Sigmoid colon (tissue), 7 donors: ENCODE measurements at regions of chr12 and their contacts with region 1.

Region 1: DNA sequence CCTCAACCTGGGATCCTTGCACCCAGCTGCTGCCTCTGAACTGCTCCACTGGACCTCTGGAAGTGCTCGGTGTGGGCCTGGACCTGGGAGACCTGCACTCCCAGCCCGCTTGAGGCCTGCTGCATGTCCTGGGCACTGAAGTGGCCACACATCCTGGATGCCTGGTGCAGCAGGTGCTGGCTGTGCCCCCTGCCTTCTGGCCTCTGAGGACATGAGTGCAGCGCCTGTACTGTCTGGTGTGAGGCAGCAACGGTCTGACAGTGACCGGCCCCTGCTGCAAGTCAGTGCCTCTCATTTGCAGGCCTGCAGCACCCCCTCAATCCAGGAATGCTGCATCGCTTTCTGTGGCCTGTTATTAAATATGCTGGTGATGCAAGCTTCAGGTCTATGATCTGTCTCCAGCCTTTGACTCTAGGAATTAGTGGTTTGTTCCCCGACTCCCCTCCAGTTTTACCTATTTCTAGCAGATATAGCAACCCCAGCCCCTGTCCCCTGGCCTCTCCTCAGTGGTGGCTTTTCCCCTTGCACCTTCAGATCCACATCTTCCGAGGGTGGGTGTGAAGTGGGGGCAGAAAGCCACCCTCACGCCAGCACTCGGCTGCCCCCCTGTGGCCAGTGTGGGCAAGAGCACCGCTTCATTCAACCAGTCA is 3.6 kb downstream of the SMIM41 start:
- DNase-seq: peak; percentile 81
- H3K4me3 ChIP-seq: no peak overlapping the region
- H3K27ac ChIP-seq: peak overlapping the region; percentile 54 to 79 (median 62)
- H3K4me1 ChIP-seq: peaks cover 0 to 27% (median 7%) of the 10 kb centered on the region in 4 donors
- H3K27me3 ChIP-seq: peaks cover 0 to under 1% (median 0%) of the 10 kb centered on the region in 3 donors
- CTCF ChIP-seq: peak; percentile 91 to 98 (median 98)
- EP300 ChIP-seq: no peak
- POLR2A ChIP-seq: no peak

Region 2: DNA sequence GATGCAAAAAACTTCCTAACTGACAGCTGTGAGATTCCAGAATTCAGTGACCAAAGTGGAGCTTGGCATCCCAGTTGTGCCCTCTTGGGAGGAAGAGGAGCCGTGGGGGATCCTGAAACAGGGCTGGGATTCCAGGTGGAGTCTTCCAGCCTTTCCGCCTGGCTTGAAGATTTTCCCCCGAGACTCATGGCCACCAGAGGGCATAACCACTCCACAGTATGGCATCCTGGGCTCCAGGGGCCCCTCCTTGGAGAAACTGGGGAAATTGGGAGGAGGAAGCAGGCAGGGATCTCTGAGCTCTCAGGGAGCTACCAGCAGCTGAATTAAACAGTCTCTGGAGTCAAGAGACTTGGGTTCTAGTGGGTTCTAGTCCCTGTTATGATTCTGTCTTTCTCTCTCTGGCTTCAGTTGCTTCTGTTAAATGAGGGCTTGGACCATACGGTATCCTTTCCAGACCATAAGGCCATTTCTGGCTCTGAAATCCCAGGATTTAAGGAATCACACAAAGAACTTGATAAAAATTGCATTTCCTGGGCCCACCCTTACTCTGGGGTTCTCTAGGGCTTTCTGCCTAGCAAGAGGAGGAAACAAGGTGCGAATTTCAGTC is 79.0 kb before region 1 on chr12:
- intact Hi-C with region 1: loop called (anchors 1 kb)
- DNase-seq: peak; percentile 82
- H3K4me3 ChIP-seq: no peak overlapping the region
- H3K27ac ChIP-seq: no peak overlapping the region
- H3K4me1 ChIP-seq: peaks cover 0 to 27% (median 19%) of the 10 kb centered on the region in 4 donors
- H3K27me3 ChIP-seq: peaks cover 12 to 43% (median 37%) of the 10 kb centered on the region in 3 donors
- CTCF ChIP-seq: peak; percentile 29 to 69 (median 64)
- EP300 ChIP-seq: no peak
- POLR2A ChIP-seq: no peak